ENCODE measurements at regions of chr4 and their contacts with region 1.

Region 1: DNA sequence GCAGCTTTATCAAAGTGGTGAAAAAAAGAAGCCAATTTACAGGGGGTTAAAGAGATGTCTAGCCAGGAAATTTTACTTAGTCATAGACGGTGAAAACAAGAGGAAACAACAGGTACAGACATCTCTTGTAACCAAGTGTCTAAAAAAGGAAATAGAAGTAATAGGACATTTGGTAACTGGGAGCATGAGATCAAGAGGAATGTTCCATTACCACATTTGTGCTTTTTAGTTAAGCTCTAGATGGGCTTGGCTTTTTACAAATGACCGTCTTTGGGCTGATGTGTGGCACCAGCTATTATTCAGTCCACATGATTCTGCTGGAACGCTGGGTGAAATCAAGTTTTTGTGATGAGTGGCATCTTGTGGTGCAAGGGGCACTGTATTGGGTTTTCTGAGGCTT is 179.5 kb downstream of the SMIM20 start:
- DNase-seq: no peak
- H3K4me3 Mint-ChIP-seq: no peak overlapping the region
- H3K27ac Mint-ChIP-seq: peak overlapping the region; percentile 91
- H3K4me1 Mint-ChIP-seq: peaks cover 62% of the 10 kb centered on the region
- H3K27me3 Mint-ChIP-seq: no peaks in the 10 kb centered on the region

Region 2: GRCh38 chr4:26104056-26104685 is 10.6 kb after region 1 on chr4:
- intact Hi-C with region 1: loop called (anchors 1 kb)
- DNase-seq: no peak
- H3K4me3 Mint-ChIP-seq: no peak overlapping the region
- H3K27ac Mint-ChIP-seq: peak overlapping the region; percentile 77
- H3K4me1 Mint-ChIP-seq: peaks cover 40% of the 10 kb centered on the region
- H3K27me3 Mint-ChIP-seq: no peaks in the 10 kb centered on the region